ENCODE measurements at regions of chr22 and their contacts with region 1.

Region 1: GRCh38 chr22:31970490-31971444 is 26.4 kb downstream of the YWHAH start:
- DNase-seq: peak; percentile 63 to 94 (median 89)

Region 2: GRCh38 chr22:31661851-31662656 is 308.7 kb before region 1 on chr22 and contains the start of gene PISD:
- intact Hi-C with region 1: loop called (anchors 5 kb)
- DNase-seq: peak; percentile 89 to 97 (median 94)

Region 3: DNA sequence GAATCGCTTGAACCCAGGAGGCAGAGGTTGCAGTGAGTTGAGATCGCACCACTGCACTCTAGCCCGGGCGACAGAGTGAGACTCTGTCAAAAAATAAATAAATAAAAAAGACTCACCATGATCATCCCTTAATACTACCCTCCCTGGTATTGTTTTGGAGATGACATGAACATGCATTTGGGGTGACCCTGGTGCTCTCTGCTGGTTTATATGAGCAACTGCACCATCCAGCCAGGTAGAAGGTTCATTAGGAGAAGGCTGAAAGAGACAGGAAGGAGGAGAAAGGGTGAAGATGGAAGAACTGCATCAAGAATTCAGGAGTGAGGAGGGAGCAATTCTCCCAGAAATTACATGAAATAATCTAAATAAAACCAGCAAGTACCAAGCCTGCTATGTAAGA is 110.1 kb after region 1 on chr22:
- intact Hi-C with region 1: loop called (anchors 10 kb)
- DNase-seq: peak in 24 of 42 donors; percentile 4 to 72 (median 36)

Region 4: GRCh38 chr22:32389685-32390084 is 418.9 kb after region 1 on chr22:
- intact Hi-C with region 1: loop called (anchors 10 kb)
- DNase-seq: peak in 15 of 42 donors; percentile 12 to 61 (median 33)

Region 5: DNA sequence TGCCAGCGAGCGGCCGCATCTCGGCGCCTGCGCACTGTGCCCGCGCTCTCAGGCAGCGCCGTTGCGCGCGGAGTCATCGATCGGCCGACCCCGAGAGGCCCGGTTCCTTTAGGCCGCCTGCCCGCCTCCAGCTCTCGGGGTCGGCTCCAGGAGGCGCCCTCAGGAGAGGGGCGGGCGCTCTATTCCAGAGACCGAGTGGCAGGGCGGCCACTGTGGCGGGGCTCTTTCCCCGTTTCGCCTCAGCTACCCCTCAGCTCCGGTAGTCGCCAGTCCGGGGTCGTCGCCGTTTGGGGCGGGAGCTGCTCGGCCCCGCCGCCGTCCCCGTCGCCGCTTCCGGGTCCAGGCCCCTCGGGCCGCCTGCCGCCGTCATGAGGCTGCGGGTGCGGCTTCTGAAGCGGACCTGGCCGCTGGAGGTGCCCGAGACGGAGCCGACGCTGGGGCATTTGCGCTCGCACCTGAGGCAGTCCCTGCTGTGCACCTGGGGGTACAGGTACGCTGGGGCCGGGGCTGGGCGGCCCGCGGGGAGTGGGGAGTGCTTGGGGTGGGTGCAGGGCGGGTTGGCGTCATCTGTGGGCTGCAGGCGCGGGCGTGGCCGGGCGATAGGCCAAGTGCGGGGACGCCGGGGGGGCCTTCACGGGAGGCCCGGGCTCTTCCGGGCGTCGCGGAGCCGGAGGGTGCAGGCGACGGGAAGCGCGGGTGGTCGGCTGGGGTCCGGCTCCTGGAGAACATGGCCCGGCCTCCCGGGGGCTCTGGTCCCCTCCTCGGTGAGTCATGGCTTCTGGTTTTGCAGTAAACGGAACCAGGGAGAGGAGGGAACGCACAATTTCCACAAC is 504.1 kb after region 1 on chr22 and contains the start of gene FBXO7:
- intact Hi-C with region 1: loop called (anchors 10 kb)
- DNase-seq: peak; percentile 75 to 97 (median 94)